K562 (cell line): ENCODE measurements at regions of chr2 and their contacts with region 1.

Region 1: GRCh38 chr2:113080134-113080533 is 12.4 kb downstream of the IL1F10 start:
- DNase-seq: peak; percentile 60 to 64 (median 62)
- ATAC-seq: peak; percentile 97
- H3K4me3 ChIP-seq: no peak overlapping the region
- H3K27ac ChIP-seq: no peak overlapping the region
- H3K4me1 ChIP-seq: no peaks in the 10 kb centered on the region
- H3K27me3 ChIP-seq: peaks cover 2 to 14% of the 10 kb centered on the region in 2 experiments; a peak in 4 of 5 replicates
- CTCF ChIP-seq: peak; percentile 93 to 96 (median 96)
- EP300 ChIP-seq: no peak
- POLR2A ChIP-seq: no peak
- RAD21 ChIP-seq: peak; percentile 88 to 90

Region 2: DNA sequence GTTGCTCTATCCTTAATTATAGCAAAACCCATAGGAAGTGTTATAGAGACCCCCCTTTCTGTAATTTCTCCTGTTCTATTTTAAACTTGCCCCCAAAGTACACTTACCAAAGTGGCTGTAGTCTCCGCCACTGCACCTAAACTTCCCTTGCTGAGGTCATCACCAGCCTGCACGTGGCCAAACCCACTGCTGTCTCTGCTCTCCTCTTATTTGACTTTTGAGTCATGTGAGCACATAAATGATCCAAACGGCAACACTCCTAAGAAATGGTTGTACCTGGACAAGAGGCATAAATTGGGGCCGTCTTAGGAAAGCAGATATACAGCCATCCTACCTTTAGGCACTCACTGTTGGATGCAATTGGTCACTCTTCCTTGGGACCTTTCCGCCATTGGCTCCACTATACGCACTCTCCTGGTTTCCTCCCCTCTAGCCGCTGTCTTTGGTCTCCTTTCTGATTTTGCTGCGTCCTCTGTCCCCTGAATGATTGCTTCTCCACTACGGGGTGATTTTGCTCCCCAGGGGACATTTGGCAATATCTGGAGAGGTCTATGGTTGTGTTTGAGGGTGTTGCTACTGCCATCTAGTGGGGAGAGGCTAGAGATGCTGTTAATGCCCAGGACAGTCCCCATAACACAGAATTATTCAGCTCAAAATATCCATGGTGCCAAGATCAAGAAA is 121.6 kb before region 1 on chr2:
- CTCF ChIA-PET with region 1: interaction called, 4 read pairs
- POLR2A ChIA-PET with region 1: interaction called, 3 read pairs
- in situ Hi-C with region 1: no loop called
- intact Hi-C with region 1: loop called (anchors 10 kb)
- DNase-seq: peak; percentile 75 to 81 (median 78)
- ATAC-seq: peak; percentile 97
- H3K4me3 ChIP-seq: no peak overlapping the region
- H3K27ac ChIP-seq: no peak overlapping the region
- H3K4me1 ChIP-seq: no peaks in the 10 kb centered on the region; a peak in 1 of 5 replicates
- H3K27me3 ChIP-seq: peaks cover 21 to 29% of the 10 kb centered on the region in 2 experiments
- CTCF ChIP-seq: peak; percentile 82 to 93 (median 90)
- EP300 ChIP-seq: no peak
- POLR2A ChIP-seq: no peak
- RAD21 ChIP-seq: peak; percentile 70 to 78

Region 3: DNA sequence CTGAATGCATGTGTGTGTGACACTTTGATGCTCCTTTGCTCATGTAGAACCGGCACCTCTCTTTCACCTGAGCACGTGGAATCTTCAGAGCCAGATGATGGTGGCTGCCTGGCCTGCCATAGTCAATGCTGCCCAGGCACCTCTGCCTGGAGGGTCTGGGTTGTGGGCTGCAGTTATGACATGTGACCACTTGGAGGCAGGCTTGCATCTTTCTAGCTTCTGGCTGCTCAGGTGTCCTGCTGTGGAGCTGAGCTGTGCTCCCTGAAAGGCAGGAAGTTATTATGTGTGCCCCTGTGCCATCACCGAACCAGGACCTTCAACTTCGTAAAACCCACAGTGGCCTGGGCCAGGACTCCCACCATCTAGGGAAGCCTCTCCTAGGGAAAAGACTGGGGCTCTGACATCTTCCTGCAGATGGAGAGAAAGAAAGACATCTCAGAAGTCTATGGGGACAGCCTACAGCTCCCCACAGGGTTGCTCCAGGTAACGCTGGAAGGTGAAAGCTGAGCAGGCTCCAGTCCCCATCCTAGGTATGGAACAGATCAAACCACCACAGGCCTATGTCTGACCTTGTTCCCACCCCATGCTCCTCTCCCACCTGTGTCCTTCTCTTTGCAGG is 123.9 kb after region 1 on chr2:
- CTCF ChIA-PET with region 1: interaction called, 3 read pairs
- POLR2A ChIA-PET with region 1: interaction called, 4 read pairs
- in situ Hi-C with region 1: no loop called
- intact Hi-C with region 1: loop called (anchors 5 kb)
- DNase-seq: peak; percentile 80 to 82 (median 80)
- ATAC-seq: peak; percentile 97
- H3K4me3 ChIP-seq: no peak overlapping the region
- H3K27ac ChIP-seq: no peak overlapping the region
- H3K4me1 ChIP-seq: no peaks in the 10 kb centered on the region
- H3K27me3 ChIP-seq: peaks cover 2 to 13% of the 10 kb centered on the region in 2 experiments; a peak in 3 of 5 replicates
- CTCF ChIP-seq: peak; percentile 88 to 95 (median 92)
- EP300 ChIP-seq: no peak
- POLR2A ChIP-seq: no peak
- RAD21 ChIP-seq: peak; percentile 83 to 88

Region 4: DNA sequence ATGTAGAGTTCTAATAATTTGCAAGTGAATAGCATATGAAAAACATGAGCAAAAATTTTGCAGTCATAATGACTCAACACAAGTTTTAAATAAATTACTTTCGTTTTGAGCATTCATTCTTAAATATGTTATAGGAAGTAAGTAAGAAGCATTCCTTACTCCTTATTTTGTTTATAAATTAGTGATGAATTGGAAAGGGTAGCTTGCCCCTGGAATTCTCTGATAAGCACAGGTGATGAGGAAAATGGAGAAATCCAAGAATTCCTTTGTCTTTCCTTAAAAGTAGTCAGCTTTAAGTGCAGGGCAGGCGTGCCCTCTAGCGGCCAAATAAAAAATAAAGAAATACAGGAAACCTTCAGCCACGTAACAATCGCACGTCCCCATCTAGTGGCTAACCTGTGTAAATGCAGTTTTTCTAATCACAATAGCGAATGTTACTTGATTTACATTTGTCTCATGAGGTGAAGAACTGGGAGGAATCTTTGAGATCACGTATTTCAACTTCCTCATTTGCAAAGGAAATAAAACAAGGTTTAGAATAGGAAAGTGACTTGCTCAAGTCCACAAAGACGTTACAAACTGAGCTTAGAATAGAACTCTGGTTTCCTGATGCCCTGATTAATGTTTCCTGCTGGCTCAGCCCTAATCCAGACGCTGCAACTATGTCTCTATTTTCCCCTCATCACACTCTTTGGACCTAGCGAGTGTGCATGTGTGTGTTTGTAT is 310.2 kb after region 1 on chr2:
- CTCF ChIA-PET with region 1: interaction called, 6 read pairs
- POLR2A ChIA-PET with region 1: no interaction called
- in situ Hi-C with region 1: no loop called
- intact Hi-C with region 1: loop called (anchors 5 kb)
- DNase-seq: peak; percentile 51 to 71 (median 57)
- ATAC-seq: peak; percentile 90
- H3K4me3 ChIP-seq: no peak overlapping the region
- H3K27ac ChIP-seq: no peak overlapping the region
- H3K4me1 ChIP-seq: no peaks in the 10 kb centered on the region
- H3K27me3 ChIP-seq: no peaks in the 10 kb centered on the region; a peak in 1 of 5 replicates
- CTCF ChIP-seq: peak; percentile 91 to 95 (median 93)
- EP300 ChIP-seq: no peak
- POLR2A ChIP-seq: no peak
- RAD21 ChIP-seq: peak; percentile 23 to 27; a peak in 1 of 4 replicates

Region 5: DNA sequence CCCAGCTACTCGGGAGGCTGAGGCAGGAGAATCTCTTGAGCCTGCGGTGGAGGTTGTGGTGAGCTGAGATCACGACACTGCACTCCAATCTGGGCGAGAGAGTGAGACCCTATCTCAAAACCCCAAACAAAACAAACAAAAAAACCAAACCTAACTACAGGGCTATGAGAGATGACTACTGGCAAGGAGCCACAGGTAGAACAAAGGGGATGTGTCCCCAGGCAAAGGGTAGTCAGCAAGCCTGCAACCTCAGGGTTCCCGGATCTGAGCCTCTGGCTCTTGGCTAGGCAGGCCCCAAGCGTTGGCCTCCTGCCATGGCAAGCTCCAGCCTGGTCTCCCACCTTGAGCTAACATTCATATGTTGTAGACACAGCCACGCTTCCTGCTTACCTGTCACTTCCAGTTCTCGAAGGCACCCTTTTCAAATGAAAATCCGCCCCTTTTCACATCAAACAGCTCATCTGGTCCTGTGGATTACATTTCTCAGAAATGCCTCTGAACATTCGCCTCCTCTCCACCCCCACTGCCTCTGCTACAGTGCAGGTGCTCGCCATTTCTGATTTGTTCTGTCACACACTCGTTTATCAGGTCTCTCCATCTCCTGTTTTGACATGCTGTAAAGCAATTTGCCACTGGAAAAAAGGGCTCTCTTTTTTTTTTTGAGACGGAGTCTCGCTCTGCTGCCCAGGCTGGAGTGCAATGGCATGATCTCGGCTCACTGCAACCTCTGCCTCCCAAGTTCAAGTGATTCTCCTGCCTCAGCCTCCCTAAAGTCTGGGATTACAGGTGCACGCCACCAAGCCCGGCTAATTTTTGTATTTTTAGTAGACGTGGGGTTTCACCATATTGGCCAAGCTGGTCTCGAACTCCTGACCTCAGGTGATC is 796.6 kb after region 1 on chr2:
- CTCF ChIA-PET with region 1: no interaction called
- POLR2A ChIA-PET with region 1: no interaction called
- in situ Hi-C with region 1: no loop called
- intact Hi-C with region 1: no loop called
- DNase-seq: peak in 2 of 4 experiments; percentile 37 to 56
- ATAC-seq: peak; percentile 85
- H3K4me3 ChIP-seq: no peak overlapping the region
- H3K27ac ChIP-seq: no peak overlapping the region
- H3K4me1 ChIP-seq: peaks cover 6 to 10% of the 10 kb centered on the region in 2 experiments; a peak in 3 of 5 replicates
- H3K27me3 ChIP-seq: no peaks in the 10 kb centered on the region
- CTCF ChIP-seq: 0 out of 6 replicates have a peak, but pooled peaks of 1 of the 3 experiments have one; percentile 14
- EP300 ChIP-seq: 0 out of 2 replicates have a peak, but pooled peaks have one; percentile 15
- POLR2A ChIP-seq: no peak
- RAD21 ChIP-seq: no peak